ENCODE measurements at regions of chr11 and their contacts with region 1.

Region 1: DNA sequence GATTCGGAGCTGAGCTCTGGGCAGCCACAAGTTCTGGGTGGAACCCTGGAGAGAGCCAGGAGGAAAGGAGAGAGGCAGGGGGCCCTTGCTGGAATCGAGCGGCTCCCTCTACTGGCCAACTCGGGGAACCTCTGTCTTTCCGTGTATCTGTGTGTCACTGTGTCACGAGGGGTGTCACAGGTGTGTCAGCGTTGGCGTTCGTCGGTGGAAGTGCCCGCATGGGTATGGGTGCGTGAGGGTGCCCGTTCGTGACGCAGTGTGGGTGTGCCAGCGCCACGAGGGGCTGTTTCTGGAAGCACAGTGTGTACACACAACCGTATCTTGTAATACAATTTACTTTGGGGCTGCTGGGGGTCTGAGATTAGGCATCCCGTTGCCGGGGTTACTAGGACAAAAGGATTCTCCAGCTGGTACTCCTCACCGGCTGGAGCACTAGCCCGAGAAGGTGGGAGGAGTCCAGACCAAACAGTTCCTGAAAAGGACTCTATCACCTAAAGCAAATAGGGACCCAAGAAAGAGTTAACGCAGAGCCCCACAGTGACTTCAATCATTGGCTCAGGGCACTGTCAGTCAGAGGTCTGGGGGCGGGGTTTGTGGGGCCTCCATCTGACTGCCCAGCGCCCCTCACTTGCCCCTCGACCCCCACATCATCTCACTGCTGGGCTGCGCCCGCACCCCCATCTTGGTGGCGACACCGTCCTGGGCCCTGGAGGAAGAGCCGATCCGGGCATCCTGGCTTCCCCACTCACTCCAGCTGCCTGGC is 2.6 kb upstream of the BCL9L start:
- DNase-seq: peak; percentile 96
- H3K4me3 Mint-ChIP-seq: peak overlapping the region; percentile 96
- H3K27ac Mint-ChIP-seq: peak overlapping the region; percentile 95
- H3K4me1 Mint-ChIP-seq: peaks cover 37% of the 10 kb centered on the region
- H3K27me3 Mint-ChIP-seq: no peaks in the 10 kb centered on the region

Region 2: GRCh38 chr11:118689851-118690552 is 238.3 kb before region 1 on chr11:
- CTCF ChIA-PET with region 1: interaction called, 18 read pairs
- intact Hi-C with region 1: loop called (anchors 1 kb)
- DNase-seq: peak; percentile 96
- H3K4me3 Mint-ChIP-seq: peak overlapping the region; percentile 77
- H3K27ac Mint-ChIP-seq: peak overlapping the region; percentile 82
- H3K4me1 Mint-ChIP-seq: peaks cover 46% of the 10 kb centered on the region
- H3K27me3 Mint-ChIP-seq: no peaks in the 10 kb centered on the region

Region 3: GRCh38 chr11:118883368-118884071 is 44.8 kb before region 1 on chr11 and contains the start of gene CXCR5:
- CTCF ChIA-PET with region 1: interaction called, 3 read pairs
- intact Hi-C with region 1: loop called (anchors 1 kb)
- DNase-seq: peak; percentile 87
- H3K4me3 Mint-ChIP-seq: peak within 1 kb of the TSS; percentile 83
- H3K27ac Mint-ChIP-seq: peak within 1 kb of the TSS; percentile 99
- H3K4me1 Mint-ChIP-seq: peaks cover 84% of the 10 kb centered on the region
- H3K27me3 Mint-ChIP-seq: no peaks in the 10 kb centered on the region
- total RNA-seq, gene CXCR5: 25.6 to 26.1 TPM

Region 4: DNA sequence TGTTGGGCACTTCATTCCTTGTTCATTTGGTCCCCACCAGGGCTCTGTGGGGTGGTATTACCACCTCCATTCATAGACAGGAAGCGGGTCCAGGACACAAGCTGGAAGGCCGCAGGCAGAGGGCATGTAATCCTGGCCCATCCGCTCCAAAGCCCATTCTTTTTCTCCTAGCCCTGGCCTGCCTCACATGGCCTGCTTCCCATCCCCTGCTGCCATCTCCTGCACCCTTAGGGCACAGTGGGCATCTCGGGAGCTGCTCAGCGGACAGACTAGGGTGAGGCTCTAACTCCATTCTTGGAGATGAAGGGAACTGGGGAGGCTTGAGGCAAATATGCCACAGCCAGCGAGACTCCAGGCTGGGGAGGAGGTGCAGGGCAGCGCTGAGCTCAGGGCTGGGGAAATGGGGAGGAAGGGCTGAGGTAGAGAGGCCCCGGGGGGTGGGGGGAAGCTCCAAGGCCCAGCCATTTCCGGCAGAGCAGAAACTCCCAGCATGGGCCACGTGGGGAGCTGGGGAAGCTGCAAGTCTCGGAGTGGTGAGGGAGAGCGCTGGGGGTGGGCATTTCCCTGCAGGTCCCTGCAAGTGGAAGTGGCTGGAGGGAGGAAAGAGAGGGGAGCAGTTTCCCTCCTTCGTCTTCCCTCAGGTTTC is 11.8 kb after region 1 on chr11:
- CTCF ChIA-PET with region 1: interaction called, 34 read pairs
- intact Hi-C with region 1: loop called (anchors 1 kb)
- DNase-seq: peak; percentile 90
- H3K4me3 Mint-ChIP-seq: peak overlapping the region; percentile 55
- H3K27ac Mint-ChIP-seq: peak overlapping the region; percentile 56
- H3K4me1 Mint-ChIP-seq: peaks cover 36% of the 10 kb centered on the region
- H3K27me3 Mint-ChIP-seq: no peaks in the 10 kb centered on the region

Region 5: GRCh38 chr11:118997627-118998387 is 69.5 kb after region 1 on chr11 and contains the start of gene CENATAC:
- CTCF ChIA-PET with region 1: interaction called, 4 read pairs
- intact Hi-C with region 1: loop called (anchors 1 kb)
- DNase-seq: peak; percentile 98
- H3K4me3 Mint-ChIP-seq: peak within 1 kb of the TSS; percentile 88
- H3K27ac Mint-ChIP-seq: peak within 1 kb of the TSS; percentile 96
- H3K4me1 Mint-ChIP-seq: peaks cover 33% of the 10 kb centered on the region
- H3K27me3 Mint-ChIP-seq: no peaks in the 10 kb centered on the region
- total RNA-seq, gene CENATAC: 17.4 to 18.0 TPM

Region 6: DNA sequence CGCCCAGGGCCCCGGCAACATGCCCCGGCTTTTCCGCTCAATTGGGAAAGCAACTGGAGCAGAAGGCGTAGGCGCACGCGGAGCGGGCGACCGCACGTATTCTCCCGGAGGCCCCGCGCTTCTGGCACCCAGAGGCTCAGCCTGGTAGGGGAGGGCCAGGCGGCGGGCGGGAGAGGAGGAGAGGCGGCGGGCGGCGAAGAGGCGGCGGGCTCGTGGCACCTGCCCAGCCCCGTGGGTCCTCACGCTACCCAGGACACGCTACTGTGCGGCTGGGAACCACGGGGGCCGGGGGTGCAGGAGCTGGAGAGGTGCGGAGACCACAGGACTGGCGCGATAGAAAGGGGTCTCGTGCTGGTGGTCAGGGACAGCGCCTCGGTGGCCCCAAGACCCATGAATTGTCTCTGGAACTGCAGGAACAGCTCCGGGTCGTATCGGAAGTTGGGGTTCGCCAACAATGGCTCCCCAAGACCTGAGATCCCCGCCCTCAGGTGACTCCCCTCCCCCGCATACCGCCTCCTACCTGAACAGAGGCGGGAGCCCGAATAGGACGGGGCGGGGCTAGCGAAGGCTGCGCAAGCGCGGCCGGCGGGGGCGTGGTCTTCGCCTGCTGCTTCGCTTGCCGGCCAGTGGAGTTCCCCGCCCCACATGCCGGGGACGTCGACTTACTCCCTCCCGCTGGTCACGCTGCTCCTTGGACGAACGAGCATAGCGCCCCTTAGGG is 102.2 kb after region 1 on chr11 and contains the start of gene SLC37A4:
- CTCF ChIA-PET with region 1: no interaction called
- intact Hi-C with region 1: loop called (anchors 1 kb)
- DNase-seq: peak; percentile 99
- H3K4me3 Mint-ChIP-seq: peak within 1 kb of the TSS; percentile 77
- H3K27ac Mint-ChIP-seq: peak within 1 kb of the TSS; percentile 85
- H3K4me1 Mint-ChIP-seq: peaks cover 23% of the 10 kb centered on the region
- H3K27me3 Mint-ChIP-seq: no peaks in the 10 kb centered on the region
- total RNA-seq, gene SLC37A4: 28.3 to 30.3 TPM

Region 7: DNA sequence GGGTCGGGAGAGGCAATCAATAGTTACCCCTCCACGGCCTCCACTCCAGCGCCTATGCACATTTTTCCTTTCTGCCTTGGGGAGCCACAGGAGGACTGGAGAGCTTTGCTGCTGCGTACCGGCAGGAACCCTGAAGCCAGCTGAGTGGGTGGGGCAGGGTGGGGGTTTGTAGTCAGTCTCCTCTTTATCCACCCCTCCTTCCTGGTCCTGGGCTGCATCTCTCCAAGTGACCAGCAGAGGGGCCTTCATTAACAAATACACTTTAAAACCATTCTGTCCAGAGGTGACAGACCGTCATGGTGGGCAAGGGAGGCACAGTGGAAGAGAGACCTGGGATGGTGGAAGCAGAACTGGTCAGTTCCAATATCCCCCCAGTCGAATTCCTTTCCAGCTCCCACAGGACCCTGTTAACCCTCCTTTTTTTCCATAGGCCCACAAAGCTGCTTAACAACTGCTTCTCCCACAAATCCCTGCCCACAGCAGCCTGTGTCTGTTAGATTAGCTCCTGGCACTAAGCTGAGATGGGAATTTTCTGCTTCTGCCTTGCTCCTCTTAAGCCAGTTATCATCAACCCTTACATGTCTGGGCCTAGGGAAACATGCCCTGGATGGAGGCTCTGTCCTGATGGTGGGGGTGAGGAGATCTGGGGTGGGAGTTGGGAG is 216.7 kb after region 1 on chr11:
- CTCF ChIA-PET with region 1: no interaction called
- intact Hi-C with region 1: no loop called
- DNase-seq: peak; percentile 43
- H3K4me3 Mint-ChIP-seq: no peak overlapping the region
- H3K27ac Mint-ChIP-seq: no peak overlapping the region
- H3K4me1 Mint-ChIP-seq: peaks cover 5% of the 10 kb centered on the region
- H3K27me3 Mint-ChIP-seq: peaks cover 38% of the 10 kb centered on the region

Region 8: DNA sequence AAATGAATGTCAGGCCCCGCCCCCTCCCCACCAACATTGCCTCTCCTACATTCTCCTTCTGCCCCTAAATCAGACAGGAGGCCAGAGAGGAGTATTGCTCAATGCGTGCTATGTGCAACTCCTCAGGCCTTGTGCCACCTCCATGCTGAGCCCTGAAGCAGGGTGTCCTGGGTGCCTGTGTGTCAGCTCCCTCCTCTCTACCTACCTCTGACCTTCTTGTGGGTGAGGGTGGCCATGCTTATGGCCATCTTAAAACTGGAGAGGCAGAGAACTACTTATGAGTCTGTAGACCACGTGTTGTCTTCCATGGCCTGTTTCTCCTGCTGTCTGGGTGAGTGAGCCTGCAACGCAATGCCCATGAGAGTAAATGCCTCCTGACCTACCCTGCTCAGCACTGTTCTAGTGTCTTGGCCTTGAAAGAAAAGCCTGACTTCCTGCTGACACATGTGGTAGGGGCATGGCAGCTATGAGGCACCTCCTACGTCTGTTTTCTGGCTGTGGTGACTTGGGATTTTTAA is 378.1 kb after region 1 on chr11:
- CTCF ChIA-PET with region 1: no interaction called
- intact Hi-C with region 1: no loop called
- DNase-seq: peak; percentile 74
- H3K4me3 Mint-ChIP-seq: peak overlapping the region; percentile 60
- H3K27ac Mint-ChIP-seq: peak overlapping the region; percentile 93
- H3K4me1 Mint-ChIP-seq: peaks cover 32% of the 10 kb centered on the region
- H3K27me3 Mint-ChIP-seq: no peaks in the 10 kb centered on the region